Sigmoid colon (tissue), 7 donors: ENCODE measurements at regions of chr1 and their contacts with region 1.

Region 1: DNA sequence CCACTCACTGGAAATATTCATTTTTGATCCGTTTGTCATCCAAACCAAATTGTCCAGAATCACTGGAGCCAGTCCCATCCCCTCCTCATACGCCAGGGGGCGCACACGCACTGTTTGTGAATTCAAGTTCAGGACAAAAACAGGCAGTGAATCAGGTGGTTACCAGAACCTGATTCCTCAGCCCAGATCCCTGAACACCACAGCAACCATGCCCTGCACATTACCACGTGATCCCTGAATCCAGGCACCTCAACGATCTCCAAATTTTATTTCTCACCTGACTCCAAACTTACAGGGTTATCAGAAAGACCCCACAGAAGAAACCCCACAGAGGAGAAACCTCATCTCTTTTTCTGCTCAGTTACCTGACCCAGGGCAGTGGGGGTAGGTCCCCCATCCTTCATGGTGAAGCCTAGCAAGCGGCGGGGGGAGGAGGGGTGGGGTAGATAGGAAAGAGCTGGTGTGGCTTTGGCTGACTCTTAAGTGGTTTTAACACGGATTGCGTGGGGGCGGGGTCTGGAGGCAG is 1.4 kb upstream of the PTPRF start:
- DNase-seq: peak; percentile 91
- H3K4me3 ChIP-seq: no peak overlapping the region
- H3K27ac ChIP-seq: peak overlapping the region in 3 of 4 donors; percentile 90 to 97 (median 93)
- H3K4me1 ChIP-seq: peaks cover 0 to 36% (median 35%) of the 10 kb centered on the region in 4 donors
- H3K27me3 ChIP-seq: no peaks in the 10 kb centered on the region
- CTCF ChIP-seq: peak; percentile 90 to 97 (median 92)
- EP300 ChIP-seq: no peak
- POLR2A ChIP-seq: no peak

Region 2: GRCh38 chr1:43493661-43494450 is 35.4 kb before region 1 on chr1:
- intact Hi-C with region 1: no loop called
- DNase-seq: no peak
- H3K4me3 ChIP-seq: no peak overlapping the region
- H3K27ac ChIP-seq: no peak overlapping the region
- H3K4me1 ChIP-seq: no peaks in the 10 kb centered on the region
- H3K27me3 ChIP-seq: no peaks in the 10 kb centered on the region
- CTCF ChIP-seq: no peak
- EP300 ChIP-seq: no peak
- POLR2A ChIP-seq: no peak

Region 3: DNA sequence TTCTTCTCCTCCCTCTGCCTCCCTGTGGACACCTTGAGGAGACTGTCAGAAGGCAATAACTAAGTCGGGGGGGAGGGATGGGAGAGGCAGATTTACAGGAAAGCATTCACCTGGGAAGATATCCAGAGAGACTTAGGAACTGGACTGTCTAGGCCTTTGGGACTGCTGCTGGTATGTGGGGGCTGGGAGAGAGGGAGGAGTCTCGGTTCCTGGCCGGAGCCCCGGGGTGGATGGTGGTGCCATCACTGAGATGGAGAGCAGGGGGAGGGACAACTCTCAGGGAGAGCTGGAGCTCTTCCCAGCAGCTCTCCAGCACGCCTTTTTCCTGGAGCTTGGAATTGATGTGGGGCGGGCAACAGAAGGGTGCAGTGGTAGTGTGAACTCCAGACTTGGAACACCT is 23.5 kb after region 1 on chr1:
- intact Hi-C with region 1: loop called (anchors 1 kb)
- DNase-seq: peak; percentile 93
- H3K4me3 ChIP-seq: no peak overlapping the region
- H3K27ac ChIP-seq: peak overlapping the region; percentile 72 to 85 (median 80)
- H3K4me1 ChIP-seq: peaks cover 0 to 62% (median 47%) of the 10 kb centered on the region in 4 donors
- H3K27me3 ChIP-seq: no peaks in the 10 kb centered on the region
- CTCF ChIP-seq: no peak
- EP300 ChIP-seq: no peak
- POLR2A ChIP-seq: no peak

Region 4: DNA sequence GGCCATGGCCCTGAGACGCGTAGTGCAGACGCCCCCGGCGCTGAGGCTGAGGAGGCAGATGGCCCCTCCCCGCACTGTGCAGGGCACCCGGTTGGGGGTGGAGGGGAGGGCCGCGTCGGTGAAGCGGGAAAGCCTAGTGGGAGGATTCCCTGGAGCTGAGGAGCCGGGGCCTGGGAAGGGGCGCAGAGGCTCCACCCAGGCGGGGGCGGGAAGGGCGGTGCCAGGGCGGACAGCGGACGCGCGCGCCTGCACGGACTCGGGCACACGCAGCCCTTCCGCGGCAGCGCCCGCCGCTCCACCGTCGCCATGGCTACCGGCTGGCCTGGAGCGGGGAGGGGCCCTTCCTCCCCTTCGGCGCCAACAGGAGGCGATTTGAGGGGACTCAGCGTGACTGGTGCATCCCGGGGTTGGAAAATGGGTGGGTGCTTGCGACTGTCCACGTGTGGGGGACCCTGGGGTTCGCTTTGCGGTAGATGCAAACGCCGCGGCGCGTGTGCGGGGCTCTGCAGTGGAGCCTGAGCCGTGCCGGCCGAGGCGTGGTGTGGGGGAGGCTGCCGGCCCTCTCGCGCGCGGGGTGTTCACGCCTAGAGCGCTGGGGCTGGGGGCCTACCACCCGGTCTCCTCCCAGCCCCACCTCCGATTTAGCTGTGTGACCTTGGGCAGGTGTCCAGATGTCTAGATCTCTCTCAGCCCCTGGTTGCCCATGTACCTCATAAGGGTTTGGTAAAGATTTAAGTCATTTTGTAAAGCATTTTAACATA is 36.5 kb after region 1 on chr1:
- intact Hi-C with region 1: loop called (anchors 1 kb)
- DNase-seq: peak; percentile 74
- H3K4me3 ChIP-seq: peak overlapping the region; percentile 30 to 54 (median 48)
- H3K27ac ChIP-seq: peak overlapping the region in 3 of 4 donors; percentile 66 to 77 (median 70)
- H3K4me1 ChIP-seq: peaks cover 3 to 35% (median 32%) of the 10 kb centered on the region in 4 donors
- H3K27me3 ChIP-seq: no peaks in the 10 kb centered on the region
- CTCF ChIP-seq: no peak
- EP300 ChIP-seq: no peak
- POLR2A ChIP-seq: no peak

Region 5: DNA sequence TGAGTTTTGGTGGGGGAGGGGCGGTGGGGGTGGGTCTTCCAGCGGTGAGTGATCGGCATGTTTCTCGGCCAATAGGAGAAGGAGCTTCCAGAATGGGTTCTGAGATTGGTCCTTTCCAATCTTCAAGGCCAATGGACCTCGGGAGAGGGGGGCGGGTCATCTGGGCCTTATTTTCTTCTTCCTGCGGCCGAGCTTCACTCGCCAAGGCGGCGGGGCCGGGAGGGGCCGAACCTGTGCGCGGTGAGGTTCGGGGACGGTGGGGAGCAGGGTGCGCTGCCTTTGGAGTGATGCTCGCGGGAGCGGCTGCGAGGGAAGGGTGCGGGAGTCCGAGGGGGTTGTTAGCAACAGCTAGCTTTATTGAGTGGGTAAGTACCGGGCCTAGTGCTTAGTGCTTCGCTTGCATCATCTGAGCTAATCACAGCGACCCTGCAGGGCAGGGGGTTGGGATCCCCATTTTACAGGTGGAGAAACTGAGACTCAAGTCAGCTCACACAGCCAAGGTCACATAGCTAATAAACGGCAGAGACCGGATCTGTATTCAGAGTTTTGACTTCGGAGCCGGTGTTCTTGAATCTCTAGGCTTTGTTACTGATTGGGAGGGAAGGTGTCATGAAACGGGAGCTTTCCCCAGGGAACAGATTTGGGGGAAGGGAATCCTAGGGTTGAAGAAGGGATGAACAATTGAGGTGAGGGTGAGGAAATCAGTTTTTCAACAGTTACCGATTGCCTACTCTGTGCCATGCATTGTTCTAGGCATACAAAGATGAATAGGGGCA is 121.2 kb after region 1 on chr1:
- intact Hi-C with region 1: loop called (anchors 1 kb)
- DNase-seq: peak; percentile 99
- H3K4me3 ChIP-seq: peak overlapping the region; percentile 68 to 81 (median 76)
- H3K27ac ChIP-seq: peak overlapping the region; percentile 88 to 97 (median 94)
- H3K4me1 ChIP-seq: peaks cover 0 to 18% (median 15%) of the 10 kb centered on the region in 4 donors
- H3K27me3 ChIP-seq: no peaks in the 10 kb centered on the region
- CTCF ChIP-seq: no peak
- EP300 ChIP-seq: no peak
- POLR2A ChIP-seq: peak; percentile 92 to 98

Region 6: GRCh38 chr1:43706598-43707495 is 177.6 kb after region 1 on chr1:
- intact Hi-C with region 1: loop called (anchors 2 kb)
- DNase-seq: peak; percentile 96
- H3K4me3 ChIP-seq: peak overlapping the region; percentile 72 to 92 (median 87)
- H3K27ac ChIP-seq: peak overlapping the region; percentile 87 to 94 (median 90)
- H3K4me1 ChIP-seq: peaks cover 0 to 40% (median 30%) of the 10 kb centered on the region in 4 donors
- H3K27me3 ChIP-seq: no peaks in the 10 kb centered on the region
- CTCF ChIP-seq: no peak
- EP300 ChIP-seq: no peak
- POLR2A ChIP-seq: no peak

Region 7: GRCh38 chr1:43946236-43947060 is 417.2 kb after region 1 on chr1 and contains the start of gene IPO13:
- intact Hi-C with region 1: loop called (anchors 5 kb)
- DNase-seq: peak; percentile 97
- H3K4me3 ChIP-seq: peak within 1 kb of the TSS; percentile 53 to 78 (median 72)
- H3K27ac ChIP-seq: peak within 1 kb of the TSS; percentile 90 to 96 (median 93)
- H3K4me1 ChIP-seq: peaks cover 0 to 45% (median 37%) of the 10 kb centered on the region in 4 donors
- H3K27me3 ChIP-seq: no peaks in the 10 kb centered on the region
- CTCF ChIP-seq: peak; percentile 40 to 74 (median 68)
- EP300 ChIP-seq: no peak
- POLR2A ChIP-seq: peak; percentile 62 to 68
- total RNA-seq, gene IPO13: 16.1 to 27.1 (median 22.3) TPM

Region 8: DNA sequence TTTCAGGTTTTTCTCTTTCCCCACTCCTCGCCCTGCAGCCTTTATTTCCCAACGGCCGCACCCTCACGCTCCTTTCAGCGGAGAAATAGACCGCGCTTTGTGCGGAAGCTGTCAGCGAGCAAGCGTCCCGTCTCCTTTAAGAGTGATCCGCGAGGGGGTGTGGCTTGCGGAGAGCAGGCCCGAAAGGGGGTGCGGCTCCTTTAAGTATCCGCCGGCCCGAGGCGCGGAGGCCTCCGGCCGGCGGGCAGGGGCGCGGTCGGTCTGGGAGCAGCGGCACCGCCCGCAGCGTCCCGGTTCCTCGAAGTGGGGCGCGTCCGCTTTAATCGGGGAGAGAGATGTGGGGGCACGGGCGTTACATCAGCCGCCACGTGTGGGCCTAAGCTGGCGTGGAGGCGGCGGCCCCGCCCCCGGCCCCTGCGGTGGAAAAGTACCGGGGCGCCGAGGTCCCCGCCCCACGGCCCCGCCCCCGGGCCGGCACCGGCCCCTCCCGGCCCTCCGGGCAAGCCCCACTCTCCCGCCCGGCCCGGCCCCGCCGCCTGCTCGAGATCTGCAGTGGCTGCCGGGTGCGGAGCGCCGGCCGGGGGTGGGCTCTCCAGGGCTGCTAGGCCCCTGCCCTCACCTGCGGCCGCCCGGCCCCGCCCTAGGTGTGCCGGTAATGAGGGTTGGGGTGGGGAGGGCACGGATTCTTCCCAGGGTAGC is 500.8 kb after region 1 on chr1:
- intact Hi-C with region 1: loop called (anchors 10 kb)
- DNase-seq: peak; percentile 95
- H3K4me3 ChIP-seq: peak overlapping the region; percentile 71 to 88 (median 87)
- H3K27ac ChIP-seq: peak overlapping the region; percentile 86 to 96 (median 94)
- H3K4me1 ChIP-seq: peaks cover 0 to 46% (median 37%) of the 10 kb centered on the region in 4 donors
- H3K27me3 ChIP-seq: no peaks in the 10 kb centered on the region
- CTCF ChIP-seq: no peak
- EP300 ChIP-seq: no peak
- POLR2A ChIP-seq: peak in 1 of 2 donors; percentile 45